Calu3 (cell line): ENCODE measurements at regions of chr22 and their contacts with region 1.

Region 1: DNA sequence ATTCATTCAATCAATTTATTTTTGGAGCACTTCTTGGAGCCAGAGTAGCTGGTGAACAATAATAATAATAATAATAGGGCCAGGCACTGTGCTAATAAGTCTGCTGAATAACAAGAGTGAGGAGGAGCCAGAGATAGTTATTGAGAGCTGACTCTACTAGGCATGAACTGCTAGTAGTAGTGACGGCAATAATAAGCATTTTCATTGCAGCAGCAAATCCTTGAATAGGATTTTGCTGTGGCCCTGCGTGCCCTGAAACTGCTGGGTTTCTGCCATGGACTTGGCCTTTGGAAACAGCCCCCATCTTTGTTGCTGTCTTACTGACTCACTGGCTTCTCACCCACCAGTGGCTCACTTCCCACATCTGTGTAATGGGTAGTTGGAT is 545.9 kb downstream of the MIAT start:
- DNase-seq: no peak
- H3K4me3 Mint-ChIP-seq: peak overlapping the region; percentile 27
- H3K27ac Mint-ChIP-seq: peak overlapping the region; percentile 63
- H3K4me1 Mint-ChIP-seq: peaks cover 18% of the 10 kb centered on the region
- H3K27me3 Mint-ChIP-seq: no peaks in the 10 kb centered on the region
- CTCF ChIP-seq: no peak

Region 2: GRCh38 chr22:27241430-27242321 is 38.4 kb after region 1 on chr22:
- CTCF ChIA-PET with region 1: no interaction called
- intact Hi-C with region 1: loop called (anchors 2 kb)
- DNase-seq: peak; percentile 14
- H3K4me3 Mint-ChIP-seq: no peak overlapping the region
- H3K27ac Mint-ChIP-seq: no peak overlapping the region
- H3K4me1 Mint-ChIP-seq: peaks cover 40% of the 10 kb centered on the region
- H3K27me3 Mint-ChIP-seq: peaks cover 9% of the 10 kb centered on the region
- CTCF ChIP-seq: no peak